ENCODE measurements at regions of chr10 and their contacts with region 1.

Region 1: GRCh38 chr10:73886085-73886529 is 11.8 kb upstream of the CAMK2G start:
- DNase-seq: no peak
- ATAC-seq: peak; percentile 93
- H3K4me3 ChIP-seq: no peak overlapping the region
- H3K27ac ChIP-seq: no peak overlapping the region
- H3K4me1 ChIP-seq: peaks cover 6% of the 10 kb centered on the region
- H3K27me3 ChIP-seq: no peaks in the 10 kb centered on the region
- CTCF ChIP-seq: peak; percentile 89 to 94 (median 90)
- EP300 ChIP-seq: no peak
- POLR2A ChIP-seq: no peak
- RAD21 ChIP-seq: peak; percentile 94

Region 2: GRCh38 chr10:73848821-73849489 is 37.2 kb before region 1 on chr10:
- CTCF ChIA-PET with region 1: interaction called, 440 read pairs
- POLR2A ChIA-PET with region 1: interaction called, 3 read pairs
- RAD21 ChIA-PET with region 1: interaction called, 299 read pairs
- SMC1A ChIA-PET with region 1: interaction called, 270 read pairs
- in situ Hi-C with region 1: loop called (anchors 5 kb)
- intact Hi-C with region 1: no loop called
- DNase-seq: peak; percentile 85
- ATAC-seq: peak; percentile 99
- H3K4me3 ChIP-seq: no peak overlapping the region
- H3K27ac ChIP-seq: no peak overlapping the region
- H3K4me1 ChIP-seq: peaks cover 5% of the 10 kb centered on the region; the same call in 1 of the 2 replicates
- H3K27me3 ChIP-seq: no peaks in the 10 kb centered on the region
- CTCF ChIP-seq: peak; percentile 99 to 100 (median 99); a peak in 5 of 6 replicates
- EP300 ChIP-seq: peak; percentile 93 to 97
- POLR2A ChIP-seq: no peak
- RAD21 ChIP-seq: peak; percentile 99

Region 3: DNA sequence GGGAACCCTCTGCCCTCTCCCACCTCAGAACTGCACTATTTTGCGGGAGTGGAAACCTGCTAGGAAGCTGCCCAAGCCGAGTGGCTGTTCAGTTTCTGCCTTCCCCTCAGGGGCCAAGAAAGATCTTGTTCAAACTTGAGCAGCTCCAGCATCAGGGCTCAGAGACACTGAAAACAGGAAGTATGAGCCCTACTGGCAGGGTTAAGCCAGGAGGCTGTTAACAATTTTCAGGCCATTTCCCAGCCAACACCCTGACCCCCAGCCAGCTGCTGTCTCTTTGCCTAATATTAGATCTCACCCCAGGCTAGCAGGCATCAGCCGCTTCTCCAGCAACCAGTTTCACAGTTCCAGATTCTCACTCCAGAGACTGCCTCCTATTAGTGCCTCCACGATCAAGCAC is 34.0 kb after region 1 on chr10:
- CTCF ChIA-PET with region 1: interaction called, 39 read pairs
- POLR2A ChIA-PET with region 1: interaction called, 3 read pairs
- RAD21 ChIA-PET with region 1: interaction called, 38 read pairs
- SMC1A ChIA-PET with region 1: interaction called, 1,048 read pairs
- in situ Hi-C with region 1: no loop called
- intact Hi-C with region 1: no loop called
- DNase-seq: no peak
- ATAC-seq: peak; percentile 85
- H3K4me3 ChIP-seq: no peak overlapping the region
- H3K27ac ChIP-seq: no peak overlapping the region
- H3K4me1 ChIP-seq: peaks cover 6% of the 10 kb centered on the region; the same call in 1 of the 2 replicates
- H3K27me3 ChIP-seq: no peaks in the 10 kb centered on the region
- CTCF ChIP-seq: no peak
- EP300 ChIP-seq: no peak
- POLR2A ChIP-seq: no peak
- RAD21 ChIP-seq: no peak

Region 4: DNA sequence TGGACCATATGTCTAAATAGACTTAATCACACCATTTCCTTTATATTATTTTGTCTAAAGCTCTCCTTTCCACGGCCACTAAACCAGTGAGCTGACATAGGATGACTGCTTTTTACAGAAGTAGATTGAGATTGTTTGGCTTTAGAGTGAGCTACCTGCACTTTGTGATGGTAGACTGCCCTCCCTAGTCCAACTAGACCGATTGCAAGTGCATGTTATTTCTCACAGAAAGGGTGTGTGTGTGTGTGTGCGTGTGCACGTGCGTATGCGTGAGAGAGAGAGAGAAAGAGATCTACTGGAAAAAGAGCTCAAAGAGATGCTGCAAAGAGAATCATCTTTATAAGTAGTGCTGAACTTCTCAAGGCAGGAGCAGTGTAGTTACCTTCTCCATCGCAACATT is 172.6 kb after region 1 on chr10:
- CTCF ChIA-PET with region 1: interaction called, 16 read pairs
- POLR2A ChIA-PET with region 1: interaction called, 3 read pairs
- RAD21 ChIA-PET with region 1: interaction called, 26 read pairs
- SMC1A ChIA-PET with region 1: interaction called, 12 read pairs
- in situ Hi-C with region 1: no loop called
- intact Hi-C with region 1: loop called (anchors 1 kb)
- DNase-seq: no peak
- ATAC-seq: peak; percentile 66
- H3K4me3 ChIP-seq: no peak overlapping the region
- H3K27ac ChIP-seq: no peak overlapping the region
- H3K4me1 ChIP-seq: peaks cover 23% of the 10 kb centered on the region
- H3K27me3 ChIP-seq: no peaks in the 10 kb centered on the region
- CTCF ChIP-seq: peak; percentile 4 to 44 (median 30); a peak in 3 of 6 replicates
- EP300 ChIP-seq: no peak
- POLR2A ChIP-seq: no peak
- RAD21 ChIP-seq: peak; percentile 77

Region 5: DNA sequence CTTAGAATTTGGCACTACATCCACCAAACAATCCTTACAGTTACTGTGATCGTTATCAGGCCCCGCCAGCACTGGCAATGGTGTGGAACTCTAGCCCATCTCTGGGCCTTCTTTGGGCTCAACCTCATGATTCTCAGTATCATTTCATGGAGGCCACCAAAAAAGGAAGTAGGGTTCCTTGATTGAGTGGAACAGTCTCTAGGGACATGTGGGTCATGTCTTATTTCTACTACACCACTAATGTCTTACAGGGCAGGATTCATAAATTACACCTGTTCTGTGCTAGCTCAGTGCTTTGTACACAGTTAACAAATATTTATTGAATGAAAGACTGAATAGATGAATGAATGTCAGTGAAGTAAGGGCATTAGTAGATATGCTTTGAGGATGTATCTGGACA is 210.7 kb after region 1 on chr10:
- CTCF ChIA-PET with region 1: interaction called, 185 read pairs
- POLR2A ChIA-PET with region 1: no interaction called
- RAD21 ChIA-PET with region 1: interaction called, 35 read pairs
- SMC1A ChIA-PET with region 1: interaction called, 70 read pairs
- in situ Hi-C with region 1: loop called (anchors 25 kb)
- intact Hi-C with region 1: no loop called
- DNase-seq: peak; percentile 69
- ATAC-seq: peak; percentile 99
- H3K4me3 ChIP-seq: no peak overlapping the region
- H3K27ac ChIP-seq: peak overlapping the region; percentile 30; the same call in 1 of the 2 replicates
- H3K4me1 ChIP-seq: peaks cover 8% of the 10 kb centered on the region
- H3K27me3 ChIP-seq: no peaks in the 10 kb centered on the region
- CTCF ChIP-seq: no peak
- EP300 ChIP-seq: 0 out of 4 replicates have a peak, but pooled peaks of 1 of the 2 experiments have one; percentile 59
- POLR2A ChIP-seq: no peak
- RAD21 ChIP-seq: no peak

Region 6: DNA sequence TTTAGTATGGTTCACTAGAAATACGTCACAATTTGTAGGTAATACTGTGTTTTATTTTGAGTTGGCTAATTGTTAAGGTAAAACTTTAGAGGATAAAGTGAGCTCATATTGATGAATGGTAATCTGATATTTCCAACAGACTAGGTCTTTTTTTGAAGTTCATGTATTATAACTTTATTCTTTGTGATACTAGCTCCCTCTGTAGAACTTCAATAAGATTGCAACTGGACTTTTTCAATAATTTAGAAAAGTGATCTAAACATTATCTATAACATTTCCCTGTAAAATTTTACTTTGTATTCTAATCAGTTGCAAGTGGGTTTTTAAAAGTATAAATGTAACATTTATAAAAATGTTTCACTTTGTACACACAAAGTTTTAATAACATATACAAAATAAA is 348.5 kb after region 1 on chr10:
- CTCF ChIA-PET with region 1: interaction called, 29 read pairs
- POLR2A ChIA-PET with region 1: no interaction called
- RAD21 ChIA-PET with region 1: interaction called, 5 read pairs
- SMC1A ChIA-PET with region 1: interaction called, 11 read pairs
- in situ Hi-C with region 1: loop called (anchors 10 kb)
- intact Hi-C with region 1: loop called (anchors 5 kb)
- DNase-seq: no peak
- ATAC-seq: no peak; the same call in 2 of the 3 replicates
- H3K4me3 ChIP-seq: no peak overlapping the region
- H3K27ac ChIP-seq: no peak overlapping the region
- H3K4me1 ChIP-seq: no peaks in the 10 kb centered on the region
- H3K27me3 ChIP-seq: no peaks in the 10 kb centered on the region
- CTCF ChIP-seq: peak in 2 of 3 experiments; percentile 35 to 43; a peak in 2 of 6 replicates
- EP300 ChIP-seq: no peak
- POLR2A ChIP-seq: no peak
- RAD21 ChIP-seq: peak; percentile 39